Naive thymus-derived CD4-positive, alpha-beta T cell (primary cell): ENCODE measurements at regions of chr19 and their contacts with region 1.

Region 1: DNA sequence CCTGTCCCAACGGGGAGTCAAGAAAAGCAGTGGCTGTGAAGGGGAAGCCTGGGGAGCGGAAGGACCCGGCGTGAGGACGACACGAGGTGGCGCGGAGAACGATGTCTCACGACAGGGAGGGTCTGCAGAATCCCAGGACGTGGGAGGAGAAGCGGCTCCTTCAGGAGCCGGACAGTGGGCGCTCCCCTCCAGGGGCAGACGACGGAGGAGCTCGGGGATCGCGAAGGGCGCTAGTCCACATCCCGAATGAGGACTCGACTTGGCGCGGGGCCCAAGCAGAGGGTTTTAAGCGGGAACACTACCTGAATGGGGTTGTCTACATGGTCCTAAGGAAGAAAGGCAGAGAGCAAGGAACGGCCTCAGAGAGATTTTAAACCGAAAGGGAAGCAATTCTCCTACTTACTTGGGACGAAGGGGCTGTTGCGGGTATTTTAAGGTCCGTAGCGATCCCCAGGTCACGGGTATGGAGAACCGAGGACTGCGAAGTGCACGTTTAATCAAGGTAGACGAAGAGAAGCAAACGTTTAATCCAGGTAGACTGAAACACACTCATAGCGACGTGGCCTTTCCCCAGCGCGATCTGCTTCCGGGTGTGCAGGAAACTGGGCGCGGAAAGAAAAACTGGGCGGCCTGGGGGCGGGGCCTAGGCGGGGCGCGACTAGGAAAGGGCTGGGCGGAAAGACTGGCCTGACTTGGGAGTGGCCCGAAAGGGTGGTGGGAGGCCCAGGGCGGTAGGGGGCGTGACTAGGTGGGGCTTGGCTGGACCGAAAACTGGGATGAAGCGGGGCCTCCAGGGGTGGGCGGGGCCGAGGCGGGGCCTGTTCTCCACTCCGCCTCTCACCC is at the start of gene ZNF841:
- DNase-seq: peak; percentile 64 to 84 (median 75)
- ATAC-seq: peak; percentile 98
- H3K4me3 ChIP-seq: peak within 1 kb of the TSS; percentile 86
- H3K4me3 Mint-ChIP-seq: peak within 1 kb of the TSS; percentile 87 to 99 (median 96)
- H3K27ac ChIP-seq: peak within 1 kb of the TSS; percentile 81
- H3K27ac Mint-ChIP-seq: peak within 1 kb of the TSS; percentile 62 to 99 (median 94)
- H3K4me1 ChIP-seq: peaks cover 0 to 9% of the 10 kb centered on the region in 2 donors
- H3K4me1 Mint-ChIP-seq: peaks cover 24 to 47% (median 39%) of the 10 kb centered on the region in 7 donors
- H3K27me3 ChIP-seq: no peaks in the 10 kb centered on the region
- H3K27me3 Mint-ChIP-seq: no peaks in the 10 kb centered on the region
- total RNA-seq, gene ZNF841: 22.6 to 43.5 (median 27.5) TPM

Region 2: DNA sequence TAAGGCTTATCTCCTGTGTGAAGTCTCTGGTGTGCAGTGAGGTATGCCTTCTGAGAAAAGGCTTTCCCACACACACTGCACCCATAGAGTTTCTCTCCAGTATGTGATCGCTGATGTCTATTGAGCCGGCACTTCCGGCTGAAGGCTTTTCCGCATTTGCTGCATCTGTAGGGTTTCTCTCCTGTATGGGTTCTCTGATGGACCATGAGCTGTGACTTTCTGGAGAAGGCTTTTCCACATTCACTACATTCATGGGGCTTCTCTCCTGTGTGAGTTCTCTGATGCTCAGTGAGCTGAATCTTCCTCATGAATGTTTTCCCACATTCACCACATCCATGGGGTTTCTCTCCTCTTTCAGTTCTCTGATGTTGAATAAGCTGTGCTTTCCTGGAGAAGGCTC is 222.3 kb before region 1 on chr19:
- CTCF ChIA-PET with region 1: no interaction called
- POLR2A ChIA-PET with region 1: no interaction called
- intact Hi-C with region 1: no loop called
- DNase-seq: no peak
- ATAC-seq: no peak
- H3K4me3 ChIP-seq: peak overlapping the region; percentile 13
- H3K4me3 Mint-ChIP-seq: no peak overlapping the region
- H3K27ac ChIP-seq: no peak overlapping the region
- H3K27ac Mint-ChIP-seq: no peak overlapping the region
- H3K4me1 ChIP-seq: no peaks in the 10 kb centered on the region
- H3K4me1 Mint-ChIP-seq: peaks cover 0 to 10% (median 0%) of the 10 kb centered on the region in 7 donors
- H3K27me3 ChIP-seq: no peaks in the 10 kb centered on the region
- H3K27me3 Mint-ChIP-seq: no peaks in the 10 kb centered on the region

Region 3: DNA sequence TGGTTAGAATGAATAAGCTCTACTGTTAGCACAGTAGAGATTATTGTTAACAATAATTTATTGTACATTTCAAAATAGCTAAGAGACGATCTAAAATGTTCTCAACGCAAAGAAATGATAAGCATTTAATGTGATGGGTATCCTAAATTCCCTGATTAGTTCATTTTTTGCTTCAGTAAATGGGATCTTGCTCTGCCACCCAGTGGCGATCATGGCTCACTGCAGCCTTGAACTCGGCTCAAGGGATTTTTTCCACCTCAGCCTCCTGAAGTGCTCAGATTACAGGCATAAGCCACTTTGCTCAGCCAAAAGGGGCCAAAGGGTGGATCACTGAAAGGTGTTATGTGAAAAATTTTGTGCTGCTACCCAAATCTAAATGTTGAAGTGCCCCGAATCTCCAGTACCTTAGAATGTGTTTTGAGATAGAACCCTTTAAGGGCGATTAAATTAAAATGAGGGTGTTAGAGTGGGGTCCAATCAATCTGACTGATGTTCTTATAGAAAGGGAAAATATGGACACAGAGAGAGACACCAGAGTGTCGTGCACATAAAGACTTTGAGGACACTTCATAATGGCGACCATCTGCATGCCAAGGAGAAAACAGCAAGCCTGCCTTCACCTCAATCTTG is 142.5 kb after region 1 on chr19:
- CTCF ChIA-PET with region 1: no interaction called
- POLR2A ChIA-PET with region 1: interaction called, 3 read pairs
- intact Hi-C with region 1: loop called in 1 of 2 experiments (anchors 1 kb)
- DNase-seq: peak in 8 of 9 donors; percentile 26 to 60 (median 50)
- ATAC-seq: peak; percentile 88
- H3K4me3 ChIP-seq: no peak overlapping the region
- H3K4me3 Mint-ChIP-seq: no peak overlapping the region
- H3K27ac ChIP-seq: no peak overlapping the region
- H3K27ac Mint-ChIP-seq: peak overlapping the region in 1 of 9 donors; percentile 26
- H3K4me1 ChIP-seq: no peaks in the 10 kb centered on the region
- H3K4me1 Mint-ChIP-seq: peaks cover 0 to 6% (median 0%) of the 10 kb centered on the region in 7 donors
- H3K27me3 ChIP-seq: no peaks in the 10 kb centered on the region
- H3K27me3 Mint-ChIP-seq: peaks cover 0 to 2% (median 0%) of the 10 kb centered on the region in 5 donors